Dorsolateral prefrontal cortex (tissue), 120 donors: ENCODE measurements at regions of chr12 and their contacts with region 1.

Region 1: GRCh38 chr12:92570056-92570753 is 132.6 kb upstream of the PLEKHG7 start:
- DNase-seq: peak in 4 of 10 donors; percentile 48 to 81 (median 64)
- H3K4me3 ChIP-seq: peak overlapping the region in 29 of 59 donors; percentile 3 to 54 (median 27)
- H3K27ac ChIP-seq: peak overlapping the region in 29 of 59 donors; percentile 1 to 82 (median 37)
- H3K27me3 ChIP-seq: no peaks in the 10 kb centered on the region
- CTCF ChIP-seq: peak; percentile 83 to 99 (median 93)

Region 2: GRCh38 chr12:91382081-91382543 is 1188.1 kb before region 1 on chr12:
- intact Hi-C with region 1: loop called (anchors 2 kb)
- DNase-seq: peak; percentile 77 to 93 (median 86)
- H3K4me3 ChIP-seq: peak overlapping the region; percentile 28 to 77 (median 60)
- H3K27ac ChIP-seq: peak overlapping the region; percentile 55 to 98 (median 92)
- H3K27me3 ChIP-seq: no peaks in the 10 kb centered on the region
- CTCF ChIP-seq: peak; percentile 81 to 99 (median 93)

Region 3: GRCh38 chr12:91811481-91812287 is 758.5 kb before region 1 on chr12:
- intact Hi-C with region 1: loop called in 1 of 2 experiments (anchors 5 kb)
- DNase-seq: peak; percentile 53 to 83 (median 66)
- H3K4me3 ChIP-seq: no peak overlapping the region
- H3K27ac ChIP-seq: peak overlapping the region in 1 of 59 donors; percentile 9
- H3K27me3 ChIP-seq: no peaks in the 10 kb centered on the region
- CTCF ChIP-seq: peak; percentile 71 to 91 (median 84)

Region 4: GRCh38 chr12:92424338-92424737 is 145.9 kb before region 1 on chr12:
- intact Hi-C with region 1: no loop called
- DNase-seq: no peak
- H3K4me3 ChIP-seq: no peak overlapping the region
- H3K27ac ChIP-seq: no peak overlapping the region
- H3K27me3 ChIP-seq: no peaks in the 10 kb centered on the region
- CTCF ChIP-seq: no peak

Region 5: GRCh38 chr12:92629349-92630065 is 59.3 kb after region 1 on chr12:
- intact Hi-C with region 1: no loop called
- DNase-seq: peak in 1 of 10 donors; percentile 23
- H3K4me3 ChIP-seq: no peak overlapping the region
- H3K27ac ChIP-seq: no peak overlapping the region
- H3K27me3 ChIP-seq: peaks cover 0 to 3% (median 0%) of the 10 kb centered on the region in 45 donors
- CTCF ChIP-seq: no peak